Breast epithelium (tissue), 4 donors: ENCODE measurements at regions of chr7 and their contacts with region 1.

Region 1: GRCh38 chr7:52669027-52669426 is 366.4 kb upstream of the POM121L12 start:
- DNase-seq: no peak
- H3K4me3 ChIP-seq: no peak overlapping the region
- H3K27ac ChIP-seq: no peak overlapping the region
- H3K4me1 ChIP-seq: no peaks in the 10 kb centered on the region
- H3K27me3 ChIP-seq: no peaks in the 10 kb centered on the region
- CTCF ChIP-seq: no peak
- POLR2A ChIP-seq: no peak

Region 2: DNA sequence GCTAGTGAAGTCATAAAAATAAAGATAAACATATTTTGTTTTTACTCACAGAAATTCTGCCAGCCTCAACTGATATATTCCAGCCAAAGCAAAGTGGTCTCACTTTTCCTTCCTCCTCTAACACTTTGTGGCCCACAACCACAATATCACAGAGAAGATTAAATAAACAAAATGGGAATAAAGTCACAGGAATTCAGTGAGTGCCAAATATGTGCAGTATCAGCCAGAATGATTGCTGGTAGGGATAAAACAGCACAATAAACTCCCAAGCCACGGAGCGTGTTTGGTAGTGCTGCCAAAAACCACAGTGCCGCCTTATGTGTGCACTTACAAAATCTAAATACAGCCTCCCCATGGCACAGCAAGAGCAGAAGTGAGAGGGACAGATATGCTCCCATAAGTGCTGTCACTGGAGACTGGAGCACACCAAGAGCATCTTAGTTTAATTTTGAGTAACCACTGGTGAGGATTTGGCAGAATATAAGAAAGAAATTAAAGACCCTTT is 522.2 kb after region 1 on chr7:
- intact Hi-C with region 1: loop called (anchors 5 kb)
- DNase-seq: no peak
- H3K4me3 ChIP-seq: no peak overlapping the region
- H3K27ac ChIP-seq: no peak overlapping the region
- H3K4me1 ChIP-seq: no peaks in the 10 kb centered on the region
- H3K27me3 ChIP-seq: no peaks in the 10 kb centered on the region
- CTCF ChIP-seq: no peak
- POLR2A ChIP-seq: no peak